Calu3 (cell line): ENCODE measurements at regions of chr3 and their contacts with region 1.

Region 1: DNA sequence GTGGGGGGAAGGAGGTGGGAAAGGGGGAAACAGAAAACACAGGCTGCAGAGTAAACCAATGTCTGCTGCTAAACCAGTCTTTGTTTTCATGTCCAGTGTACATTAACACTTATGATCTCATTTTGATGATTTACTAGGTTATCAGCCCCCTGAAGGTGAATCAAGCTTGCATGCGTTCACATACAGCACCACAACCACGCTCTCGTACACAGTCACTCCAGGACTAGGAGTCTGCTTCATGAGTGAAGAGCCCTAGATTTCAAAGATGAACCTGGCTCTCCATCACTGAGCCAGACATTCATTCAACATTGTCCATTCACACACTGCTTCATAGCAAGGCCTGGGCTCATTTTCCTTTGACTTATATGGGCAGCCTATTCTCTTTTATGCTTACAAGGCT is 51.7 kb upstream of the TRIM59 start:
- DNase-seq: no peak
- H3K4me3 Mint-ChIP-seq: no peak overlapping the region
- H3K27ac Mint-ChIP-seq: no peak overlapping the region
- H3K4me1 Mint-ChIP-seq: peaks cover 5% of the 10 kb centered on the region
- H3K27me3 Mint-ChIP-seq: no peaks in the 10 kb centered on the region
- CTCF ChIP-seq: no peak

Region 2: DNA sequence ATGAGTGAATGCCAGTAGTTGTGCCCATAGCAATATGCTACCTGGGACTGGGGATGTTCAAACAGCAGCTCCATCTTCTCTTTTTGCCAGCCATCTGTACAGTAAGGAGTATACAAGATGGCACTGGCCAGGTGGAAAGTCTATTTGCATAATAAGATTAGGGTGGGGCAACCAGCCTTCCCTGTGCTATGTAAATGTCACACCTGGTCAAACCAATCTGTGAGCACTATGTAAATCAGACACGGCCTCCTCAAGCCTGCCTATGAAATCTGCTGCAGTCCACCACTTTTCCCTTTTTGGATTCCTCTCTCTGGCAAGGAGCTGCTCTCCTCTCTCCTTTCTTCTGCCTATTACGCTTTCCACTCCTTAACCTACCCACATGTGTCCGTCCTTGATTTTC is 223.1 kb before region 1 on chr3:
- CTCF ChIA-PET with region 1: no interaction called
- intact Hi-C with region 1: no loop called
- DNase-seq: no peak
- H3K4me3 Mint-ChIP-seq: no peak overlapping the region
- H3K27ac Mint-ChIP-seq: no peak overlapping the region
- H3K4me1 Mint-ChIP-seq: no peaks in the 10 kb centered on the region
- H3K27me3 Mint-ChIP-seq: no peaks in the 10 kb centered on the region
- CTCF ChIP-seq: no peak

Region 3: GRCh38 chr3:160565442-160566403 is 64.4 kb after region 1 on chr3 and contains the start of gene KPNA4:
- CTCF ChIA-PET with region 1: no interaction called
- intact Hi-C with region 1: loop called (anchors 2 kb)
- DNase-seq: peak; percentile 100
- H3K4me3 Mint-ChIP-seq: peak within 1 kb of the TSS; percentile 94
- H3K27ac Mint-ChIP-seq: peak within 1 kb of the TSS; percentile 97
- H3K4me1 Mint-ChIP-seq: peaks cover 53% of the 10 kb centered on the region
- H3K27me3 Mint-ChIP-seq: no peaks in the 10 kb centered on the region
- CTCF ChIP-seq: no peak
- total RNA-seq, gene KPNA4: 116 and 117 TPM in 2 replicates

Region 4: GRCh38 chr3:160676547-160677303 is 175.4 kb after region 1 on chr3 and contains the start of gene ARL14:
- CTCF ChIA-PET with region 1: no interaction called
- intact Hi-C with region 1: no loop called
- DNase-seq: peak; percentile 87
- H3K4me3 Mint-ChIP-seq: peak within 1 kb of the TSS; percentile 83
- H3K27ac Mint-ChIP-seq: peak within 1 kb of the TSS; percentile 95
- H3K4me1 Mint-ChIP-seq: peaks cover 68% of the 10 kb centered on the region
- H3K27me3 Mint-ChIP-seq: no peaks in the 10 kb centered on the region
- CTCF ChIP-seq: no peak
- total RNA-seq, gene ARL14: 104 and 197 TPM in 2 replicates